Thyroid gland (tissue), 4 donors: ENCODE measurements at regions of chr1 and their contacts with region 1.

Region 1: GRCh38 chr1:220272047-220272840 is at the start of gene RAB3GAP2:
- DNase-seq: peak; percentile 96 to 97
- H3K4me3 ChIP-seq: peak within 1 kb of the TSS; percentile 55 to 86 (median 82)
- H3K27ac ChIP-seq: peak within 1 kb of the TSS; percentile 41 to 88 (median 84)
- H3K4me1 ChIP-seq: peaks cover 10 to 14% of the 10 kb centered on the region in 2 donors
- H3K27me3 ChIP-seq: no peaks in the 10 kb centered on the region
- CTCF ChIP-seq: peak in 1 of 6 experiments; percentile 25
- POLR2A ChIP-seq: peak; percentile 17 to 81
- total RNA-seq, gene RAB3GAP2: 37.0 to 53.1 (median 42.9) TPM

Region 2: GRCh38 chr1:220527908-220528678 is 255.8 kb after region 1 on chr1 and contains the start of gene MARK1:
- intact Hi-C with region 1: loop called (anchors 10 kb)
- DNase-seq: peak; percentile 74 to 82
- H3K4me3 ChIP-seq: peak within 1 kb of the TSS; percentile 70 to 89 (median 80)
- H3K27ac ChIP-seq: peak within 1 kb of the TSS; percentile 73 to 87 (median 84)
- H3K4me1 ChIP-seq: peaks cover 3 to 6% of the 10 kb centered on the region in 2 donors
- H3K27me3 ChIP-seq: no peaks in the 10 kb centered on the region
- CTCF ChIP-seq: no peak
- POLR2A ChIP-seq: peak; percentile 38 to 83
- total RNA-seq, gene MARK1: 10.9 to 21.2 (median 14.4) TPM